Activated CD4-positive, alpha-beta T cell treated with anti-CD3 and anti-CD28 coated beads for 36 hours (primary cell): ENCODE measurements at regions of chr7 and their contacts with region 1.

Region 1: DNA sequence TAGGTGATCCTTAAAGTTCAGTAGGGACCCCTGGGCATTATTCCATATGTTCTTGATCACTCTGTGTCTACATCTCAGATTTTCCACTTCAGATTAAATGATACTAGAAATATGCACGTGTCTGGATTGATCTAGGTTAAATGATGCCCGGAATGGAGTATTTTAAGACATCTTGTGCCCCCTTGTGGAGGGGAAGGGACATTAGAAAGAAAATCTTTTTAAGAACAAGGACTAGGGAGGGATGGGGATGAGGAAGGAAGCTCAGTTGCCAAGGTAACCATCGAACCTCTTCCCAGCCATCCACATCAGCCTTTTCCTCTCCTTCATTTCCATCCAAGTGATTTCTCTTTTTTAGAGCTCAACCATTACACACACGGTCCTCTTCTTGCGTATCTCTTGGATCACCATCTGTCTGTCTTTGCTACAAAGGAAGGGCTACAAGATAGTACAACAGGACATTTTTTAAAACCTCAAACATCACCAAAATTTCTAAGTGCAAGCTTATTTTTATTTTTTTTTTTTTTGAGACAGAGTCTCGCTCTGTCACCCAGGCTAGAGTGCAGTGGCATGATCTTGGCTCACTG is 40.5 kb downstream of the PRSS2 start:
- DNase-seq: peak; percentile 52
- ATAC-seq: no peak
- H3K4me3 Mint-ChIP-seq: peak overlapping the region; percentile 68
- H3K27ac Mint-ChIP-seq: peak overlapping the region; percentile 99
- H3K4me1 Mint-ChIP-seq: peaks cover 83% of the 10 kb centered on the region
- H3K27me3 Mint-ChIP-seq: no peaks in the 10 kb centered on the region

Region 2: GRCh38 chr7:142323706-142324105 is 487.5 kb before region 1 on chr7:
- CTCF ChIA-PET with region 1: interaction called, 22 read pairs
- POLR2A ChIA-PET with region 1: interaction called, 5 read pairs
- intact Hi-C with region 1: loop called (anchors 1 to 2 kb)
- DNase-seq: peak; percentile 73
- ATAC-seq: peak; percentile 56
- H3K4me3 Mint-ChIP-seq: peak overlapping the region; percentile 6
- H3K27ac Mint-ChIP-seq: no peak overlapping the region
- H3K4me1 Mint-ChIP-seq: peaks cover 25% of the 10 kb centered on the region
- H3K27me3 Mint-ChIP-seq: peaks cover 2% of the 10 kb centered on the region

Region 3: DNA sequence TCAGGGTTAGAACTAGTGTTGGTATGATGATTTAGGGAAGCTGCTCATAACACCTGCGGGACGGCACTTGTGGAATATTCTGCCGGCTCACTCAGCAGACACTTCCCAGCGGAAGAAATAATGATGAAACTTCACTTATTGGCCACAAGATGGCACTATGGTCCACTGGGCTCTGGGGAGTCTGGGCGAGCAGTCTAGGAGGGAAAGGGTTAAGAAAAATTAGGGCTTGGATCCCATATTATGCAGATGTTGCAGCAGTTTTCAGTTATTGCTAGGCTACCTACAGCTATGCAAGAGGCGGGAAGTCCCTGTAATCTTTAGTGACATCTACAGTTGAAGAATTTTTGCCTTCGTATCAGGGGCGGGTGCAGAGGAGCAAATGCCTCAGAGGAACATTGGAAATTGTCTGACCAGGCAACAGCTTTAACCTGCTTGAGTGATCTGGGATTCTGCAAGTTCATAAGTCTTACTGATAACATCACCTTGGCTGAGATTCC is 314.7 kb before region 1 on chr7:
- CTCF ChIA-PET with region 1: interaction called, 7 read pairs
- POLR2A ChIA-PET with region 1: interaction called, 4 read pairs
- intact Hi-C with region 1: loop called in 1 of 2 experiments (anchors 2 kb)
- DNase-seq: peak; percentile 50
- ATAC-seq: peak; percentile 27
- H3K4me3 Mint-ChIP-seq: peak overlapping the region; percentile 36
- H3K27ac Mint-ChIP-seq: peak overlapping the region; percentile 49
- H3K4me1 Mint-ChIP-seq: peaks cover 50% of the 10 kb centered on the region
- H3K27me3 Mint-ChIP-seq: no peaks in the 10 kb centered on the region

Region 4: GRCh38 chr7:142632291-142633134 is 178.7 kb before region 1 on chr7:
- CTCF ChIA-PET with region 1: interaction called, 19 read pairs
- POLR2A ChIA-PET with region 1: interaction called, 16 read pairs
- intact Hi-C with region 1: loop called in 1 of 2 experiments (anchors 1 kb)
- DNase-seq: peak; percentile 65
- ATAC-seq: peak; percentile 59
- H3K4me3 Mint-ChIP-seq: peak overlapping the region; percentile 12
- H3K27ac Mint-ChIP-seq: peak overlapping the region; percentile 42
- H3K4me1 Mint-ChIP-seq: peaks cover 10% of the 10 kb centered on the region
- H3K27me3 Mint-ChIP-seq: peaks cover 3% of the 10 kb centered on the region

Region 5: DNA sequence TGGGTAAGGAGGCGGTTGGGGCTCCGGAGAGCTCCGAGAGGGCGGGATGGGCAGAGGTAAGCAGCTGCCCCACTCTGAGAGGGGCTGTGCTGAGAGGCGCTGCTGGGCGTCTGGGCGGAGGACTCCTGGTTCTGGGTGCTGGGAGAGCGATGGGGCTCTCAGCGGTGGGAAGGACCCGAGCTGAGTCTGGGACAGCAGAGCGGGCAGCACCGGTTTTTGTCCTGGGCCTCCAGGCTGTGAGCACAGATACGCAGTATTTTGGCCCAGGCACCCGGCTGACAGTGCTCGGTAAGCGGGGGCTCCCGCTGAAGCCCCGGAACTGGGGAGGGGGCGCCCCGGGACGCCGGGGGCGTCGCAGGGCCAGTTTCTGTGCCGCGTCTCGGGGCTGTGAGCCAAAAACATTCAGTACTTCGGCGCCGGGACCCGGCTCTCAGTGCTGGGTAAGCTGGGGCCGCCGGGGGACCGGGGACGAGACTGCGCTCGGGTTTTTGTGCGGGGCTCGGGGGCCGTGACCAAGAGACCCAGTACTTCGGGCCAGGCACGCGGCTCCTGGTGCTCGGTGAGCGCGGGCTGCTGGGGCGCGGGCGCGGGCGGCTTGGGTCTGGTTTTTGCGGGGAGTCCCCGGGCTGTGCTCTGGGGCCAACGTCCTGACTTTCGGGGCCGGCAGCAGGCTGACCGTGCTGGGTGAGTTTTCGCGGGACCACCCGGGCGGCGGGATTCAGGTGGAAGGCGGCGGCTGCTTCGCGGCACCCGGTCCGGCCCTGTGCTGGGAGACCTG is 14.4 kb before region 1 on chr7:
- CTCF ChIA-PET with region 1: interaction called, 182 read pairs
- POLR2A ChIA-PET with region 1: interaction called, 176 read pairs
- intact Hi-C with region 1: loop called (anchors 1 kb)
- DNase-seq: peak; percentile 41
- ATAC-seq: no peak
- H3K4me3 Mint-ChIP-seq: peak overlapping the region; percentile 99
- H3K27ac Mint-ChIP-seq: peak overlapping the region; percentile 99
- H3K4me1 Mint-ChIP-seq: peaks cover 59% of the 10 kb centered on the region
- H3K27me3 Mint-ChIP-seq: no peaks in the 10 kb centered on the region

Region 6: DNA sequence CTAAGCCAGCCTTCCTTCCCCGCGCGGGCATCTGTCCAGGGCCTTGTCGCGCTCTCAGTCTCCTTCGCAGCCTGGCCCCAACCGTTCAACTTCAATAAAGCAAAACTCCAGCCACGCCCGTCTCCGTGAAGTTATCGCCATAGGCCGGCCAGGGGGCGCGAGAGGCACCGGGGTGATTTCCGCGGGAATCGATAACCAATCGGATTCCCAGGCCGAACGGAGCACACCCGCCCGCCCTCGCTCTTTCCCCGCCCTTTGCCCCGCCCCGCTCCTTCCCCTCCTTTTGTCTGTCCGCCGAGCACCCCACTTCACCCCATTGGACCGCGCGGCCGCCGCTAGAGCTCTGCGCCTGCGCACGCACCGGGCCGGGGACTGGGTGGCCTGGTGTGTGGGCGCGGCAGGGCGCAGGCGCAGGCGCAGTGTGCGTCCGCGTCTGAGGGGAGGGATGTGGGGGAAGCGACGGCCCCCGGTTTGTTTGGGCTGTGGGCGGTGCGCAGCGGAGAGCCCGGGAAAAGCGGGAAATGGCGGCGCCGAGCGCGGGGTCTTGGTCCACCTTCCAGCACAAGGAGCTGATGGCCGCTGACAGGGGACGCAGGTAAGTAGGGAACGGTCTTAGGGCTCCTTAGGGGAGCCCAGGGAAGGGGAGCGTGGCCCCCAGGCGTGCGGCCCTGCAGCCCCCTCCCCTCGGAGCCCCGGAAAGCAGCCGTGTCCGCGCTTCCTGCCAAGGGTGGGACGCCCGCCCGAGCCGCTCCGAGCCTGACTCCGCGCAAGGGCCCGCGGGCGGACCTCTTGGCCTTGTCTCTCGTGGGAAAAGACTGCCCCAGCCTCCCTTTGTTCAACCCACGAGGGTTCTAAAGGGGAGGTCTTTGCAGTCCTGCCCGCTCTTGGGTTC is 476.9 kb after region 1 on chr7 and contains the start of gene CASP2:
- CTCF ChIA-PET with region 1: interaction called, 3 read pairs
- POLR2A ChIA-PET with region 1: interaction called, 3 read pairs
- intact Hi-C with region 1: loop called (anchors 1 to 2 kb)
- DNase-seq: peak; percentile 100
- ATAC-seq: peak; percentile 94
- H3K4me3 Mint-ChIP-seq: peak within 1 kb of the TSS; percentile 89
- H3K27ac Mint-ChIP-seq: peak within 1 kb of the TSS; percentile 98
- H3K4me1 Mint-ChIP-seq: peaks cover 46% of the 10 kb centered on the region
- H3K27me3 Mint-ChIP-seq: no peaks in the 10 kb centered on the region
- total RNA-seq, gene CASP2: 91.1 to 106 TPM